PC-9 (cell line): ENCODE measurements at regions of chr15 and their contacts with region 1.

Region 1: GRCh38 chr15:68304589-68305337 is 27.2 kb downstream of the FEM1B start:
- DNase-seq: no peak
- H3K4me3 ChIP-seq: no peak overlapping the region
- H3K27ac ChIP-seq: no peak overlapping the region
- H3K4me1 ChIP-seq: no peaks in the 10 kb centered on the region
- H3K27me3 ChIP-seq: no peaks in the 10 kb centered on the region
- CTCF ChIP-seq: no peak

Region 2: DNA sequence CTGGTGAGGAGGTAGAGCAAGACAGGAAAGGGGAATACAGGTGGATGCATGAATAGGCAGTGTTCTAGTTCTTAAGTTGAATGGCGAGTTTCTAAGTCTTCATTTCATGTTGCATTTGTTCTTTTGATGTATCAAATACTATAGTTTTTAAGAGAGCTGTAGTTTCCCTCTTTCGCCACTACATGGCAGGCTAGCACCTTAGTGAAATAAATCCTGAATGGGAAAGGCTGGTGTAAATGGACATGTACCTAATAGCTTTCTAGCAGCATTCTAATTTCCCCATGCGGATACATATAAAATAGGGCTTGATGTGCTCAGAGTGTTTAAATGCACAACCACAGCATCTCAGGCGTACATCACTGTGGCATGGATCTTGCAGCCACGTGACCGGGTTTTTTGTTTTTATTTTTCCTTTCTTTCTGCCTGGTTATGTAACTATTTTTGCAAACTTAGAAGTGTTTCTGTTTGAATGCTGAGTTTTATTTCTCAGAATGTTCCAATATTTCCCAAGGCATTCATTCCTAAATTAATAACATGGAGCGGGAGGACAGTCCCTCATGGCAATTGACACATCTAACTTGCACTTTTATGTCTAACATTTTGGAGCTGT is 51.7 kb before region 1 on chr15:
- CTCF ChIA-PET with region 1: interaction called, 59 read pairs
- POLR2A ChIA-PET with region 1: interaction called, 22 read pairs
- intact Hi-C with region 1: loop called (anchors 1 kb)
- DNase-seq: peak; percentile 46 to 76
- H3K4me3 ChIP-seq: no peak overlapping the region
- H3K27ac ChIP-seq: no peak overlapping the region
- H3K4me1 ChIP-seq: no peaks in the 10 kb centered on the region
- H3K27me3 ChIP-seq: no peaks in the 10 kb centered on the region
- CTCF ChIP-seq: peak; percentile 81

Region 3: GRCh38 chr15:68352401-68353062 is 47.8 kb after region 1 on chr15:
- CTCF ChIA-PET with region 1: interaction called, 22 read pairs
- POLR2A ChIA-PET with region 1: no interaction called
- intact Hi-C with region 1: no loop called
- DNase-seq: peak; percentile 45 to 68
- H3K4me3 ChIP-seq: no peak overlapping the region
- H3K27ac ChIP-seq: peak overlapping the region; percentile 90
- H3K4me1 ChIP-seq: peaks cover 39% of the 10 kb centered on the region
- H3K27me3 ChIP-seq: no peaks in the 10 kb centered on the region
- CTCF ChIP-seq: no peak

Region 4: GRCh38 chr15:68383161-68384074 is 78.7 kb after region 1 on chr15:
- CTCF ChIA-PET with region 1: no interaction called
- POLR2A ChIA-PET with region 1: no interaction called
- intact Hi-C with region 1: loop called (anchors 1 kb)
- DNase-seq: peak in 1 of 2 experiments; percentile 7
- H3K4me3 ChIP-seq: no peak overlapping the region
- H3K27ac ChIP-seq: no peak overlapping the region
- H3K4me1 ChIP-seq: 0 out of 2 replicates have a peak, but pooled peaks cover 4% of the 10 kb centered on the region
- H3K27me3 ChIP-seq: no peaks in the 10 kb centered on the region
- CTCF ChIP-seq: peak; percentile 75

Region 5: DNA sequence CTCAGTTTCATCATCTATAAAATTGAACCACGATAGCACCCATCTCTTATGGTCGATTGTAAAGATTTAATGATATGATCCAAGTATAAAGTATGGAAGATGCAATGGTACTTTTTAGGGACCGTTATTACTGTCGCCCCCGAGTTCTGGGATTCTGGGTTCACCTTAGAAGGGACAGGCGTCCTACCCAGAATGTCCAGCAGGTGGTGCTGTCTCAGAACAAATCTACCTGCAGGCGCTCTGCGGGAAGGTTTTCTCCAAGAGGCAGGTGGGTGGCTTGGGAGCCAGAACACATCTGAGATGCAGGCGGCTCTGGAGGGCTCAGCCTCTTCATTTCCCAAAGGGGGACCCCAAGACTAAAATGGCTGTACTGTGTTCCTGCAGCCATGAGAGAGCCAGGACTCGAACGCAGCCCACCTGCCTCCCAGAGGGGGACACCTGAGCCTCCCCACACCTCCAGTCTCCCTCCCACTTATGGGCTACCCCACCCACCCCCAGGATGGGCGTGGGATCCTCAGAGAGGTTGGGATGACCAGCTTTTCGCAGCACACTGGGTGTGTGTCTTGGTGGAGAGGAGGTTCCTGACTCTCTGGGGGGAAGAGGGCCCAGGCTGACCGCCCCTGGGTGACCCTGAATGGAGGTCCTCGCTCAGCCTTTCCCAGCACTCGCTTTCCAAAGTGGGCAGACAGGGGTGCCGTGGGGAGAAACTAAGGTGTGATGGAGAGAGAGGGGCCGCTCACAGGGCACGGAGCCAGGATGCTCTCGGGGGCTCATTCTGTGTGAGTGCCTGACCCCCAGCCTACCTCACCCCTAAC is 245.9 kb after region 1 on chr15:
- CTCF ChIA-PET with region 1: interaction called, 10 read pairs
- POLR2A ChIA-PET with region 1: no interaction called
- intact Hi-C with region 1: loop called (anchors 1 kb)
- DNase-seq: peak in 1 of 2 experiments; percentile 68
- H3K4me3 ChIP-seq: no peak overlapping the region
- H3K27ac ChIP-seq: no peak overlapping the region
- H3K4me1 ChIP-seq: no peaks in the 10 kb centered on the region
- H3K27me3 ChIP-seq: peaks cover 8% of the 10 kb centered on the region; the same call in 1 of the 2 replicates
- CTCF ChIP-seq: peak; percentile 86

Region 6: DNA sequence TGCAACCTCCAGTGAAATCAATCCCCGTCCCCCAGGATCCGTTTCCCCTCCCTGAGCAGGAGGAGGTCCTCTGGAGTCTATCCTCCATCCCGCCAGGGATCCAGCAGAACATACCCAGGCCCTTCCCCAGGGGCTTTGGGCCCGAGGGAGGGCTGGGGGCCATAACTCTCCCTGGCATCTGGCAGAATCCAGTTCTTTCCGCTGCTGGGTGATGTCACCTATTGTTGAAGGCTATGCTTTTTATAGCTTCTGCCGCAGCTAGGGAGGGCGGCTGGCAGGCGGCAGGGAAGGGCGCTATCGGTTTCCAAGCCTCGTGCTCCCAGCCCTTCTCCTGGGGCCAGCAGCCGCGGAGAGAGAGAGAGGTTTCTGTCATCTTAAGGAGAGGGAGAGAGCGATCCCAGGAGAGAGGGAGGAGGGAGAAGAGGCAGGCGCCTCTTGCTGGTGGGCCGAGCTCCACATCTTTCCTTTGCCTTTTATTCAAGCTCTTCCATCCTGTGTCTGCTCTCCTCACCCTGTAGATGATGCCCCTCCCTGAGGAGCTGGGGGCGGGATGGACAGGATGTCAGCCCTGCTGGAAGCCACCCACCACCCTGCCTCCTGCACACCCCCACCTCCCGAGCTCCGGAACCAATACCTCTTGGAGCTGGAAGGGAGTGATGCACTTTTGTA is 395.8 kb after region 1 on chr15:
- CTCF ChIA-PET with region 1: no interaction called
- POLR2A ChIA-PET with region 1: no interaction called
- intact Hi-C with region 1: no loop called
- DNase-seq: no peak
- H3K4me3 ChIP-seq: no peak overlapping the region
- H3K27ac ChIP-seq: no peak overlapping the region
- H3K4me1 ChIP-seq: no peaks in the 10 kb centered on the region
- H3K27me3 ChIP-seq: no peaks in the 10 kb centered on the region
- CTCF ChIP-seq: no peak

Region 7: DNA sequence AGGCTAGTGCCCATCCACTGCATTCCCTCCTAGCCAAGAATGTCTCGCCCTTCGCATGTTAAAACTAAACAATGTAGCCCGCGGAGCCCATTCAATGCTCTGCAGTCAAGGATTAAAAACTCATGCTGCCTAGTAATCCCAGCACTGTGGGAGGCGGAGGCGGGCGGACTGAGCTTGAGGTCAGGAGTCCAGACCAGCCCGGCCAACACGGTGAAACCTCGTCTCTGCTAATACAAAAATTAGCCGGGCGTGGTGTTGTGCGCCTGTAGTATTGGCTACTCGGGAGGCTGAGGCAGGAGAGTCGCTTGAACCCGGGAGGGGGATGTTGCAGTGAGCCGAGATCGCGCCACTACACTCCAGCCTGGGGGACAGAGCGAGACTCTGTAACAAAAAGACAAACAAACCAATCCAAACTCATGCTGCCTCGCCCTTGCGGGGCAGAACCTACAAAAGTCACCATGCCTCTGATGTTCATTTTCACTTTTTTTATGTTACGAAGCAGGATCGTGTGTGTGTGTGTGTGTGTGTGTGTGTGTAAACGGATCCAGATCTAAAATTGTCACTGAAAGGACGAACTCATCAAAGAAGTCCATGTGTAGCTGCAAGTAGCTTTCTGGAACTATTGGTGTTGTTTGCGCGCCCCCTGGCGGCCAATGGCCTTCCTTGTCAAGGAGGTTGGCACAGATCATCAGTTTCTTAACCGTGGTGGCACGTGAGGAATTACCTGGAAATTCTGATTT is 570.8 kb after region 1 on chr15:
- CTCF ChIA-PET with region 1: no interaction called
- POLR2A ChIA-PET with region 1: no interaction called
- intact Hi-C with region 1: loop called (anchors 5 kb)
- DNase-seq: peak; percentile 70 to 83
- H3K4me3 ChIP-seq: no peak overlapping the region
- H3K27ac ChIP-seq: no peak overlapping the region
- H3K4me1 ChIP-seq: no peaks in the 10 kb centered on the region
- H3K27me3 ChIP-seq: no peaks in the 10 kb centered on the region
- CTCF ChIP-seq: peak; percentile 84